ENCODE measurements at regions of chr11 and their contacts with region 1.

Region 1: GRCh38 chr11:22787551-22788162 is 41.9 kb downstream of the SVIP start:
- DNase-seq: no peak
- ATAC-seq: peak; percentile 71
- H3K4me3 ChIP-seq: no peak overlapping the region
- H3K27ac ChIP-seq: no peak overlapping the region
- H3K4me1 ChIP-seq: no peaks in the 10 kb centered on the region
- H3K27me3 ChIP-seq: no peaks in the 10 kb centered on the region
- CTCF ChIP-seq: peak; percentile 71

Region 2: DNA sequence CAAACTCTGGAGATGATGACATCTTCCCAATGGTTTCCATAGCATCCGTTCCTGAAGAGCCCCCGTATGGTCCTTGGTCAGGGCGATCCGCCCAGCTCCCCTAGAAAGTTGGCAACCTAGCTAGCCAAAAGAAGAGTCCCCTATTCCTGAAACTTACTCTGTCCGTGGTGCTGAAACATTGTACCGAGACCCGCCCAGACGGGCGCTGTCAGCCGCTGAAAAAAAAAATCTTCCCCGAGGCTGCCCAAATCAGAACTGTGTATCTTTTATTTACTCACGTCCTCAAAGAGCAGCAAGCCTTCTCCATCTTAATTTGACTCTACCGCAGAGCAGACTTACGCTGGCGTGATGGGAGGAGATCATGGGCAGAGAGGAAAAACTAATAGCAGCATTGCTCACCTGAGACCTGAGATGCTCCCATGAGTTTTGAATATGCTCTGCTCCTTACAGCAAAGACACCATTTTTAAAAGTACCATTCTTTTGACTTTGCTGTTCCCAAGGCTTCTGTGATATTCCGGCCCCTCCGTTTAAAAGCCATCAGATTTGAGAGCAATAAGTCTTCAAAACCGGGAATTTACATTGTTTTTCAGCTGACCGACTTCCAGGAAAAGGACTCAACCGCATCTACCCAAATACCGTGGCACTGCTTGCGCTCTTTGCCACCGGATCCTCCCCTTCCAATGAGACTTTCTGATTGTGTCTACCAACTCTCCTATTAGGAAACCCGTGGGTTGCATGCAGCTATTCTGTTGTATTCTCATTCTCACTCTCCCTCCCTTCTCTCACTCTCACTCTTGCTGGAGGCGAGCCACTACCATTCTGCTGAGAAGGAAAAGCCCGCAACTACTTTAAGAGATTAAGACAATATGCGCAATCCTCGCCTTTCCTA is 449.8 kb before region 1 on chr11 and contains the start of gene SLC17A6:
- intact Hi-C with region 1: loop called (anchors 10 kb)
- DNase-seq: no peak
- ATAC-seq: peak; percentile 36
- H3K4me3 ChIP-seq: no peak within 1 kb of the TSS
- H3K27ac ChIP-seq: no peak within 1 kb of the TSS
- H3K4me1 ChIP-seq: no peaks in the 10 kb centered on the region
- H3K27me3 ChIP-seq: peaks cover 55% of the 10 kb centered on the region
- CTCF ChIP-seq: no peak
- total RNA-seq, gene SLC17A6: not detected

Measured in upper lobe of right lung (tissue), 1 donor.